Lower leg skin (tissue), 4 donors: ENCODE measurements at regions of chr5 and their contacts with region 1.

Region 1: GRCh38 chr5:56349461-56349860 is 116.3 kb upstream of the ANKRD55 start:
- DNase-seq: no peak
- H3K4me3 ChIP-seq: no peak overlapping the region
- CTCF ChIP-seq: no peak
- POLR2A ChIP-seq: no peak

Region 2: DNA sequence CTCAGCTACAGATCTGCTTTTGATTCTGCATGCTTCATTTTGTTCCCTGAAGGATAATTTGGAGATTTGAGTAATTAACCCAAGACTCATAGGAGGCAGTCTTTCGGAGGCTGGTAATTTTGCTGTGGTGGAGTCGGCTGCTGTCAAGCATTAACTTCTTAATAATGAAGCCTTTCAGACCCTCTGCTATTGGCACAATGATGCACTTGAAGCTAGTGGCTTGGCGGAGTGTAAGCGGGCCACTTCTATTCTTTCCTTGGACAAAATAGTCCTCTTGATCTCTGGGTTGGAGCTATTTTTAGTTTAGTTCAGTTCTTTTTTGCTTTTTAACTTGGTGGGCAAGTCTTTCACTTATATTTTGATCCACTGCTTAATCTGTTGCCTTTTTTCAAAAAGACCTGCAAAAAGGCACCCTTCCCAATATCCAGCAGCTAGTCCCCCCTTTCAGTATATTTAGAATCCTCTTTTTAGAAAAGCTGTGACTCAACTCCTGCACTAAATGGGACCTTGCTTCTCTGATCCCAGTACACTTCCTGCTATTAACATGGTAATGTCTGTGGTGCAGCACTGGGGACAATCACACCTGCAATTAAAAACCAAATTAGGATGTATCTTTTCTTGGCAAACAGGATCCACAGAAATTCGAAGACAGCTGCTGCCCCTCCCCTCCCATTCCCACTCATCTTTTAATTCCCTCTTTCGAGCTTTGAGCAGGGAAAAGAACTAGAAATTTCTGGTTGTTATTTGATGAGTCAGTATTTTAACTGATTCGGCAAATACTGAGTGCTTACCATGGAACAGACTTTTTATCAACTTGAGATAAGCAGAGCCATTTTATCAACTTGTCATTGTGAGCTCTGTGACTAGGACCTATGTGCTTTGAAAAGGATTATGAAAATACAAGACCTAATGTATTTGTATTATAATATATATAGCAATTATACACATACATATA is 53.1 kb after region 1 on chr5:
- intact Hi-C with region 1: loop called (anchors 2 kb)
- DNase-seq: no peak
- H3K4me3 ChIP-seq: no peak overlapping the region
- CTCF ChIP-seq: no peak
- POLR2A ChIP-seq: no peak

Region 3: GRCh38 chr5:56951946-56952691 is 602.7 kb after region 1 on chr5 and contains the start of gene MIER3:
- intact Hi-C with region 1: no loop called
- DNase-seq: peak; percentile 62 to 95
- H3K4me3 ChIP-seq: peak within 1 kb of the TSS; percentile 68
- CTCF ChIP-seq: no peak
- POLR2A ChIP-seq: no peak
- total RNA-seq, gene MIER3: 15.7 to 32.5 (median 25.2) TPM